ENCODE measurements at regions of chr6 and their contacts with region 1.

Region 1: GRCh38 chr6:26045065-26045927 is 41.9 kb upstream of the HFE start:
- DNase-seq: peak; percentile 51
- ATAC-seq: peak; percentile 58
- H3K4me3 Mint-ChIP-seq: peak overlapping the region; percentile 91
- H3K27ac Mint-ChIP-seq: peak overlapping the region; percentile 99
- H3K4me1 Mint-ChIP-seq: peaks cover 24% of the 10 kb centered on the region
- H3K27me3 Mint-ChIP-seq: no peaks in the 10 kb centered on the region
- CTCF ChIP-seq: no peak

Region 2: GRCh38 chr6:25944688-25945574 is 100.4 kb before region 1 on chr6:
- CTCF ChIA-PET with region 1: no interaction called
- POLR2A ChIA-PET with region 1: no interaction called
- intact Hi-C with region 1: no loop called
- DNase-seq: no peak
- ATAC-seq: peak; percentile 50
- H3K4me3 Mint-ChIP-seq: no peak overlapping the region
- H3K27ac Mint-ChIP-seq: no peak overlapping the region
- H3K4me1 Mint-ChIP-seq: peaks cover 16% of the 10 kb centered on the region
- H3K27me3 Mint-ChIP-seq: no peaks in the 10 kb centered on the region
- CTCF ChIP-seq: no peak

Region 3: DNA sequence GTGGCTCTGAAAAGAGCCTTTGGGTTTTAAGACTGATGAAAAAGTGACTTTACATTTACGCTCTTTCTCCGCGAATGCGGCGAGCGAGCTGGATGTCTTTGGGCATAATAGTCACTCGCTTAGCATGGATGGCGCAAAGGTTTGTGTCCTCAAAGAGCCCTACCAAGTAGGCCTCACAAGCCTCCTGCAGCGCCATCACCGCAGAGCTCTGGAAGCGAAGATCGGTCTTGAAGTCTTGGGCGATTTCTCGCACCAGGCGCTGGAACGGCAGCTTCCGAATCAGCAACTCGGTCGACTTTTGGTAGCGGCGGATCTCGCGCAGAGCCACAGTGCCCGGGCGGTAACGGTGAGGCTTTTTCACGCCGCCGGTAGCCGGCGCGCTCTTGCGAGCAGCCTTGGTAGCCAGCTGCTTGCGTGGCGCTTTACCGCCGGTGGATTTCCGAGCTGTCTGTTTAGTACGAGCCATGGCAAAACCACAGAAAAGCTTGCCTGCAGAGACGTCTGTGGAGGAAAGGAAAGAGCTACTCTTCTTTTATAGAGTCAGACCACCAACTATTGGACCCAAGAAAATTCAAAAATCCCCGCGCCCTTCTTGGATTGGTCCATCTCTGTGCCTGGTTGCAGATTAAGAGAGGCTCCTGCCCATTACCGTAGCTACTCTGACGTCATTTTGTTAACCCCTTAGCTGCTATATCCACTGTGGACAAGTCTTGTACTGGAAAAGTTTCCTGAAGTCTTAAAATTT is 13.5 kb before region 1 on chr6:
- CTCF ChIA-PET with region 1: interaction called, 25 read pairs
- POLR2A ChIA-PET with region 1: interaction called, 477 read pairs
- intact Hi-C with region 1: loop called (anchors 1 kb)
- DNase-seq: peak; percentile 55
- ATAC-seq: peak; percentile 62
- H3K4me3 Mint-ChIP-seq: peak overlapping the region; percentile 93
- H3K27ac Mint-ChIP-seq: peak overlapping the region; percentile 98
- H3K4me1 Mint-ChIP-seq: peaks cover 40% of the 10 kb centered on the region
- H3K27me3 Mint-ChIP-seq: peaks cover 2% of the 10 kb centered on the region
- CTCF ChIP-seq: no peak

Region 4: GRCh38 chr6:26087284-26088115 is 42.2 kb after region 1 on chr6 and contains the start of gene HFE:
- CTCF ChIA-PET with region 1: no interaction called
- POLR2A ChIA-PET with region 1: interaction called, 12 read pairs
- intact Hi-C with region 1: no loop called
- DNase-seq: peak; percentile 46
- ATAC-seq: peak; percentile 69
- H3K4me3 Mint-ChIP-seq: peak within 1 kb of the TSS; percentile 89
- H3K27ac Mint-ChIP-seq: peak within 1 kb of the TSS; percentile 82
- H3K4me1 Mint-ChIP-seq: peaks cover 43% of the 10 kb centered on the region
- H3K27me3 Mint-ChIP-seq: no peaks in the 10 kb centered on the region
- CTCF ChIP-seq: no peak
- total RNA-seq, gene HFE: 0.98 and 1.1 TPM in 2 replicates

Region 5: DNA sequence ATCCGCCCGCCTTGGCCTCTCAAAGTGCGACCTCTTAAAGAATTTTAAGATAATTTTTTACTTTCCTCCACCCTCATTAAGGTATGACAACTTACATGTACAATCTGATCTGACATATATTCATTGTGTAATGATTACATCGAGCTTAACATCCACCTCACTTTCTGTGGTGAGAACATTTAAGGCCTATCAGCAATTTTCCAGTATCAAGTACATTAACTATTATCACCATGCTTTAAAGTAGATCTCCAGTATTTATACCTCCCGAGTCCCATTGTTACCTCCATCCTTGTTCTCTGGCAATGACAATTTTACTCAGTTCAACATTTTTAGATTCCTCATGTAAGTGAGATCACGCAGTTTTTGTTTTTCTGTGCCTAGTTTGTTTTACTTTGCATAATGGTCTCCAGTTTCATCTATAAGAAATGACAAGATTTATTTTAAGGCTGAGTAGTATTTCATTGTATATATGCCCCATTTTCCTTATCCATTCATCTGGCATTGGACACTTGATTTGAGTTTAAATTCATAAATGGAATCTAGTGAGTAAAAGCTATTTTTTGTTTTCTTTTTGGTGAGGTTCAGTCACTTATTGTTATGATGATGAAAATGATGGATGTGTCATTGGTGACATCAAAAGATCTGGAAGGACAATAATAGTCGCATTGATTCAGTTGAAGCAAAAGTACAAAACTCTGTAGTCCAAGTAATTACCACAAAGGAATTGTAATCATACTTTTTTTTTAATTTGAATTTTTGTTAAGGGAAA is 1779.9 kb after region 1 on chr6:
- CTCF ChIA-PET with region 1: no interaction called
- POLR2A ChIA-PET with region 1: interaction called, 10 read pairs
- intact Hi-C with region 1: no loop called
- DNase-seq: no peak
- ATAC-seq: no peak
- H3K4me3 Mint-ChIP-seq: peak overlapping the region; percentile 96
- H3K27ac Mint-ChIP-seq: peak overlapping the region; percentile 99
- H3K4me1 Mint-ChIP-seq: peaks cover 31% of the 10 kb centered on the region
- H3K27me3 Mint-ChIP-seq: no peaks in the 10 kb centered on the region
- CTCF ChIP-seq: no peak

Region 6: GRCh38 chr6:27871924-27872638 is 1826.8 kb after region 1 on chr6:
- CTCF ChIA-PET with region 1: no interaction called
- POLR2A ChIA-PET with region 1: interaction called, 14 read pairs
- intact Hi-C with region 1: no loop called
- DNase-seq: peak; percentile 73
- ATAC-seq: peak; percentile 80
- H3K4me3 Mint-ChIP-seq: peak overlapping the region; percentile 94
- H3K27ac Mint-ChIP-seq: peak overlapping the region; percentile 95
- H3K4me1 Mint-ChIP-seq: peaks cover 36% of the 10 kb centered on the region
- H3K27me3 Mint-ChIP-seq: no peaks in the 10 kb centered on the region
- CTCF ChIP-seq: no peak

Measured in activated B cell treated with CpG ODN at 0.5 μM for 24 hours (primary cell).